ENCODE measurements at regions of chr9 and their contacts with region 1.

Region 1: DNA sequence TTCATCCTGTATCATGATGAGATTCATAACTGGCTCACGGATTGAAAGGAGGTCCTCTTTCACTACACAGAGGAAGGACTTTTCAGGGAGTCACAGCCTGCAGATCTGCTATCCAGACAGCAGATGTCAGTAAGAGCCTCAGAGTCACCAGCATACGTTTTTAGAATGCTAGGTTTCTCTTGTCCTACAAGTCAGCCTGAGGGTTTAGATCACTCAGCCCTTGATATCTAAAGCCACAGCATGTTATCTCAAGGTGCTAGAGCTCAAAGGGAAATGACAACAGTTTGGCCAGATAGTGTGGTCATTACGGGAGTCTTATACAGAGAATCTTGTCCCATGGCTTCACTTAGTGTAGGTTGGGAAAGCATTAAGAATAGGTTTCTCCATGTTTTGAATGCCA is 30.9 kb upstream of the SLC46A2 start:
- DNase-seq: peak; percentile 22
- ATAC-seq: peak; percentile 85
- H3K4me3 ChIP-seq: no peak overlapping the region
- H3K27ac ChIP-seq: no peak overlapping the region
- H3K4me1 ChIP-seq: peaks cover 0 to 16% of the 10 kb centered on the region in 2 experiments; a peak in 2 of 4 replicates
- H3K27me3 ChIP-seq: no peaks in the 10 kb centered on the region
- CTCF ChIP-seq: peak; percentile 56 to 69 (median 64)
- POLR2A ChIP-seq: no peak
- RAD21 ChIP-seq: peak; percentile 68

Region 2: GRCh38 chr9:112898872-112899311 is 22.7 kb before region 1 on chr9:
- CTCF ChIA-PET with region 1: interaction called, 10 read pairs
- POLR2A ChIA-PET with region 1: no interaction called
- RAD21 ChIA-PET with region 1: no interaction called
- intact Hi-C with region 1: no loop called
- DNase-seq: no peak
- ATAC-seq: no peak
- H3K4me3 ChIP-seq: no peak overlapping the region
- H3K27ac ChIP-seq: no peak overlapping the region
- H3K4me1 ChIP-seq: 0 out of 4 replicates have a peak, but pooled peaks cover 0 to 2% of the 10 kb centered on the region in 2 experiments
- H3K27me3 ChIP-seq: 0 out of 2 replicates have a peak, but pooled peaks cover 3% of the 10 kb centered on the region
- CTCF ChIP-seq: no peak
- POLR2A ChIP-seq: no peak
- RAD21 ChIP-seq: no peak

Region 3: GRCh38 chr9:112971415-112971814 is 49.9 kb after region 1 on chr9:
- CTCF ChIA-PET with region 1: no interaction called
- POLR2A ChIA-PET with region 1: no interaction called
- RAD21 ChIA-PET with region 1: no interaction called
- intact Hi-C with region 1: loop called (anchors 2 kb)
- DNase-seq: peak; percentile 29
- ATAC-seq: peak; percentile 78
- H3K4me3 ChIP-seq: no peak overlapping the region
- H3K27ac ChIP-seq: no peak overlapping the region
- H3K4me1 ChIP-seq: no peaks in the 10 kb centered on the region
- H3K27me3 ChIP-seq: no peaks in the 10 kb centered on the region
- CTCF ChIP-seq: peak; percentile 31 to 69 (median 61); a peak in 4 of 6 replicates
- POLR2A ChIP-seq: no peak
- RAD21 ChIP-seq: peak; percentile 63